PC-3 (cell line): ENCODE measurements at regions of chr6 and their contacts with region 1.

Region 1: DNA sequence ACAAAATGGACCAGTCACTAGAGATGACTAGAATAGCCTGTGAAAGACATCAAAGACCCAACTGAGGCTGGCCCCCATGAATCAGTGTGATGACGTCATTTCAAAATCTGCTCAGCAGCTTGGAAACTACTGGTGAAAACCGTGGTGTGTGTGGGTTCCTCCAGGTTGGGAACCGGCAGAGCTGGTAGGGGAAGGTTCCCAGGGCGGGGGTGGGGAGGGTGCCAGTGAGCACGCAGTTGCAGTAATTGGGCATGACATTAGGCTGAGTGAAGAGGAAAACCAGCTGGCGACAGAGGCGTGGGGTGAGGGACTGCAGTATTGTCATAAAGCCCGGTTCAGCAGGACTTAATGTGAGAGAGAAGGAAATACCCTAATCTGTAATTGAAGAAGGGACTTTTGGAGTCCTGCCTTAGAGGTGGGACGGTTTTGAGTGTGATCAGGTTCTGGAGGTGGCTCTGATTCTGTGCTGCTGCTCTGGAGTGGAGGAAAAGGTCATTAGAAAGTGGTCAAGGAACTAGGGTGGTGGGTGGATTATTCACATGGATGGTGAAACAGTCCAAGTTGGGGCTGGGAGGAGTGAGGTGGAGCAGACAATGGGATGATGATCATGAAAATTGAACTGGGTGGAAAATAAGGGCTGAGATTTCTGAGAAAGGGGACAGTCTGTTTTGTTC is 52.0 kb upstream of the MTHFD1L start:
- DNase-seq: peak; percentile 72
- ATAC-seq: peak; percentile 32
- H3K4me3 ChIP-seq: peak overlapping the region; percentile 51
- H3K27ac ChIP-seq: peak overlapping the region; percentile 97
- H3K4me1 ChIP-seq: peaks cover 28% of the 10 kb centered on the region
- H3K27me3 ChIP-seq: no peaks in the 10 kb centered on the region
- CTCF ChIP-seq: no peak

Region 2: GRCh38 chr6:150016324-150017185 is 796.9 kb before region 1 on chr6:
- CTCF ChIA-PET with region 1: no interaction called
- POLR2A ChIA-PET with region 1: no interaction called
- intact Hi-C with region 1: loop called (anchors 5 kb)
- DNase-seq: peak; percentile 84
- ATAC-seq: peak; percentile 79
- H3K4me3 ChIP-seq: no peak overlapping the region
- H3K27ac ChIP-seq: no peak overlapping the region
- H3K4me1 ChIP-seq: no peaks in the 10 kb centered on the region
- H3K27me3 ChIP-seq: no peaks in the 10 kb centered on the region
- CTCF ChIP-seq: peak; percentile 52; the same call in 1 of the 2 replicates

Region 3: DNA sequence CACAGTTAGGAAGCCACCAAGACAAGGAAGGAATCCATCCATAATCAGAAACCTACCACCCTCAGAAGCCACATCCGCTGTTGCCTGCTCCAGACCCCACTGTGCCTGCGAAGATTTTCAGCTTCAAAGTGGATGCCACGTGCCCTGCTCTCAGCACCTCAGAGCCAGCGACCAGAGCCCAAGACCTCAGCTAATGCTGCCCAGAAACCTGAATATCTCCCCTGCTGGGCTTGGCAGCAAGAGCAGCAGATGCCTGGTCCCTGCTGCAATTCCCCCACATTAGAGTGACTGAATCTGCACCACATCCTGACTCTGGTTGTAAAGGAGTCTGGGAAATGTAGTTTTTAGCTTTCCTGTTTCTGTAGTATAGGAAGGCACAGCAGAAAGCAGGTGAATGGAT is 733.9 kb before region 1 on chr6:
- CTCF ChIA-PET with region 1: interaction called, 4 read pairs
- POLR2A ChIA-PET with region 1: no interaction called
- intact Hi-C with region 1: loop called (anchors 2 kb)
- DNase-seq: peak; percentile 10
- ATAC-seq: no peak
- H3K4me3 ChIP-seq: no peak overlapping the region
- H3K27ac ChIP-seq: no peak overlapping the region
- H3K4me1 ChIP-seq: peaks cover 18% of the 10 kb centered on the region
- H3K27me3 ChIP-seq: no peaks in the 10 kb centered on the region
- CTCF ChIP-seq: no peak

Region 4: GRCh38 chr6:150857062-150857944 is 43.8 kb after region 1 on chr6:
- CTCF ChIA-PET with region 1: interaction called, 4 read pairs
- POLR2A ChIA-PET with region 1: no interaction called
- intact Hi-C with region 1: loop called (anchors 5 kb)
- DNase-seq: peak; percentile 92
- ATAC-seq: peak; percentile 90
- H3K4me3 ChIP-seq: peak overlapping the region; percentile 40; the same call in 1 of the 2 replicates
- H3K27ac ChIP-seq: peak overlapping the region; percentile 88
- H3K4me1 ChIP-seq: peaks cover 19% of the 10 kb centered on the region
- H3K27me3 ChIP-seq: no peaks in the 10 kb centered on the region
- CTCF ChIP-seq: no peak

Region 5: GRCh38 chr6:150981095-150981494 is 167.6 kb after region 1 on chr6:
- CTCF ChIA-PET with region 1: no interaction called
- POLR2A ChIA-PET with region 1: no interaction called
- intact Hi-C with region 1: no loop called
- DNase-seq: no peak
- ATAC-seq: peak; percentile 72
- H3K4me3 ChIP-seq: no peak overlapping the region
- H3K27ac ChIP-seq: no peak overlapping the region
- H3K4me1 ChIP-seq: no peaks in the 10 kb centered on the region
- H3K27me3 ChIP-seq: no peaks in the 10 kb centered on the region
- CTCF ChIP-seq: no peak

Region 6: DNA sequence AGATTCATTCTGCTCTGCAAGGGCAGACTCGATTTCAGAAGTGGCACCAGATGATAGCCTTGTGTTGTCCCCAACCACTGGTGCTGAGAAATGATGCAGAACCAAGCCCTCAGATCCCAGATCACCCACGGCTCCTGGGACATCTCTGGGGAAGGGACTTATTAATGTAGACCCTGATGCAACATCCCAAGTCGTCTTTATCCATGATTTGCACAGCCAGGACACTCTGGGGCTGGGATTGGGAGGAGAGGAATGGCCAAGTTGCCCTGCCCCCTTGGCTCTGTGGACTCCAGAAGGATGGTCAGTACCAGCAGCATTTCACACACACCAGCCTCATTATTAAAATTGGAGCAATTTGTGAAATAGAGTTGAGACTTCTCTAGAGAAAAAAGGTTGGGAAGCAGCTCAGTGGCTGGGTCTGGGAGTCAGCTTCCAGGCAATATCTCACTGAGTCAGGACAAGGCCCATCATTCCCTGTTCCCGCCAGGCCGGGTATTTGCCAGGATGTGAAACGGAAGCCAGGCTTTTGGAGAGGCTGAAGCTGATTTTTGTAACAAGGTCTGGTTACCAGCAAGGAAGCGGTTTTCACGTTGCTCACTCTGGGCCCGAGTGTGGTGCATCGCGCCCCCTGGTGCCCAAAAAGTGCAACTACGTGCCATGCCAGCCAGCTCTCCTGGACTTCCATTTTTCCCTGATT is 510.5 kb after region 1 on chr6:
- CTCF ChIA-PET with region 1: interaction called, 7 read pairs
- POLR2A ChIA-PET with region 1: interaction called, 12 read pairs
- intact Hi-C with region 1: no loop called
- DNase-seq: peak; percentile 88
- ATAC-seq: peak; percentile 68
- H3K4me3 ChIP-seq: peak overlapping the region; percentile 89
- H3K27ac ChIP-seq: peak overlapping the region; percentile 87
- H3K4me1 ChIP-seq: peaks cover 27% of the 10 kb centered on the region
- H3K27me3 ChIP-seq: no peaks in the 10 kb centered on the region
- CTCF ChIP-seq: peak; percentile 85